Ascending aorta (tissue), 2 donors: ENCODE measurements at regions of chr1 and their contacts with region 1.

Region 1: DNA sequence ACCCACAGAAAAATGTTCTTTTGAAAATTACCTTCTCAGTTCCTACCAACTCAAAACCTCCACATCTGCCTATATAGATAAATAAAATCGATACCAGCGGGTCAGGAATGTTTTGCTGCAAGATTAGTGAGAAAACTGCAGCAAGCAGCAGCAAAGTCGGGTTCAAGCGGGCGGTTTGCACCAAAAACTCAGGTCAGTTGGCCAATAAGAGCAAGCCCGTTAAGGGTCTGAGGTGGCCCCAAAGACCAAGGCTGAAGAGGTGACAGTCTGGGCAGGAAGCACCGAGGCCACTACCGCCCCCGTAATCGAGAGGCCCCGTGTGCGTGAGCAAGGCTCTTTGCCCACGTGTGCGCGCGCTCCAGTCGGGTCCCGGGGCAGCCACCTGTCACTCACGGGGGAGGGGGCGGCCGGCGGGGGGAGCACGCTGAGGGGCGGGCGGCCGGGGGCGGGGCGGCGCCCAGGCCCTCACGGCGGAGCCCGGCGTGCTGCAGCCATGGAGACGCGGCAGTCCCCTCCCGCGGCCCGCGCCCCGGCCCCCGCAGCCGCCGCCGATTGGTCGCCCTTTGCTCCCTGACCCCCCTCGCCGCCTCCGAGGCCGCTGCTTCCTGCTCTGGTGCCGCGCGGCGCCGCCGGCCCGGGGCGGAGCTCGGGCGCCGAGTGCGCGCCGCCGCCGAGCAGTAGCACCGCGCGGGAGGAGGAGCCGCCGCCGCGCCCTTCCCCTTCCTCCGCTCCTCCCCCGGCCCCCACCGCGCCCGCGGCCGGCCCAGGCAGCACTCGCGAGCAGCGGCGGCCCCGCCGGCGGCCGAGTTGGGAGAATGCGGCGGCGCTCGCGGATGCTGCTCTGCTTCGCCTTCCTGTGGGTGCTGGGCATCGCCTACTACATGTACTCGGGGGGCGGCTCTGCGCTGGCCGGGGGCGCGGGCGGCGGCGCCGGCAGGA is at the start of gene GALNT2:
- DNase-seq: peak; percentile 54 to 94
- H3K4me3 ChIP-seq: peak within 1 kb of the TSS; percentile 86 to 94
- H3K27ac ChIP-seq: peak within 1 kb of the TSS; percentile 93 to 94
- H3K4me1 ChIP-seq: peaks cover 0 to 31% of the 10 kb centered on the region in 2 donors
- H3K27me3 ChIP-seq: no peaks in the 10 kb centered on the region
- CTCF ChIP-seq: no peak
- total RNA-seq, gene GALNT2: 129 TPM

Region 2: GRCh38 chr1:229661022-229661877 is 405.5 kb before region 1 on chr1:
- intact Hi-C with region 1: loop called (anchors 5 kb)
- DNase-seq: peak in 1 of 2 donors; percentile 89
- H3K4me3 ChIP-seq: no peak overlapping the region
- H3K27ac ChIP-seq: peak overlapping the region in 1 of 2 donors; percentile 10
- H3K4me1 ChIP-seq: no peaks in the 10 kb centered on the region
- H3K27me3 ChIP-seq: no peaks in the 10 kb centered on the region
- CTCF ChIP-seq: peak; percentile 84 to 91 (median 85)

Region 3: GRCh38 chr1:230084138-230084880 is 17.6 kb after region 1 on chr1:
- intact Hi-C with region 1: loop called (anchors 2 kb)
- DNase-seq: peak; percentile 75 to 95
- H3K4me3 ChIP-seq: peak overlapping the region in 1 of 2 donors; percentile 12
- H3K27ac ChIP-seq: peak overlapping the region; percentile 92 to 95
- H3K4me1 ChIP-seq: peaks cover 30 to 66% of the 10 kb centered on the region in 2 donors
- H3K27me3 ChIP-seq: no peaks in the 10 kb centered on the region
- CTCF ChIP-seq: no peak

Region 4: GRCh38 chr1:230113607-230114236 is 47.0 kb after region 1 on chr1:
- intact Hi-C with region 1: loop called (anchors 2 kb)
- DNase-seq: peak in 1 of 2 donors; percentile 83
- H3K4me3 ChIP-seq: peak overlapping the region in 1 of 2 donors; percentile 7
- H3K27ac ChIP-seq: peak overlapping the region; percentile 77 to 84
- H3K4me1 ChIP-seq: peaks cover 19 to 33% of the 10 kb centered on the region in 2 donors
- H3K27me3 ChIP-seq: no peaks in the 10 kb centered on the region
- CTCF ChIP-seq: no peak

Region 5: DNA sequence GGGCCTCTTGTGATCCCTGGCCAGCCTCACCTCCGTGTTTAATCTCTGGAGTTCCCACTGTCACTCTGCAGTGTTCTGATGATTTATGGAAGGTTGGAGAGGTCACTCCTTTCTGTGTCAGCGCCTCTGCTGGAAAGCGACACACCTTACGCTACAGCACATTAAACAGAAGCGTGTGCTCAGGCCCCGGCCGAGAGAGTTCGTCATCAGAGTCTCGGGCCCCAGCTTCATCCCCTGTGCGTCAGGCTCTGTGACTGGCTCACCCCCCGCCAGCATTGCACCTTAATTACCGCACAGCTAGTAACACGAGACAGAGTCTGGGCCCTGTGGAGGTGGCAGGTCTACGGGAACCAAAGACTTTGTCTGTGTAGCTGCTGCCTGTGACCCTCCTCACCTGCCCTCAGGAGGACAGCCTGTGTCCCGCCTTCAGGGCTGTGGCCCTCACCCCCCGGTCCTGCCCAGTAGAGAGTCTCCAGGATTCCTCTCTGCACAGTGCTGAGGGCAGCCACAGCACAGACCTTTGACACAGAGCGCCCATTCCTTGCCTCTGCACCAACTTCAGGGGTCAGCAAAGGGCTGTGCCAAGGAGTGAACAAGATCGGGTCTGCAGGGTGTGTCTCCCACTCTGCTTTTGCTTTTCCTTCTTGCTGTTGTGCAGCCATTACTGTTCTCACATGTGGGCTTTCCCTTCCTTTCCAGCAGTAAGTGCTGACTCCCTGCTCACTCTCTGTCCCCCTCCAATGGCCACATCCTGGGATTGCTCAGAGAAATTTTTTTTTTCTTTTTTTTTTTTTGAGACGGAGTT is 201.8 kb after region 1 on chr1:
- intact Hi-C with region 1: loop called (anchors 2 kb)
- DNase-seq: peak in 1 of 2 donors; percentile 66
- H3K4me3 ChIP-seq: no peak overlapping the region
- H3K27ac ChIP-seq: peak overlapping the region; percentile 81 to 83
- H3K4me1 ChIP-seq: peaks cover 5 to 41% of the 10 kb centered on the region in 2 donors
- H3K27me3 ChIP-seq: no peaks in the 10 kb centered on the region
- CTCF ChIP-seq: peak in 2 of 3 experiments; percentile 63 to 66